Activated CD4-positive, alpha-beta T cell treated with anti-CD3 and anti-CD28 coated beads for 36 hours (primary cell): ENCODE measurements at regions of chr3 and their contacts with region 1.

Region 1: GRCh38 chr3:191336833-191337232 is 6.5 kb upstream of the UTS2B start:
- DNase-seq: no peak
- ATAC-seq: no peak
- H3K4me3 Mint-ChIP-seq: peak overlapping the region; percentile 36
- H3K27ac Mint-ChIP-seq: peak overlapping the region; percentile 58
- H3K4me1 Mint-ChIP-seq: peaks cover 51% of the 10 kb centered on the region
- H3K27me3 Mint-ChIP-seq: no peaks in the 10 kb centered on the region

Region 2: DNA sequence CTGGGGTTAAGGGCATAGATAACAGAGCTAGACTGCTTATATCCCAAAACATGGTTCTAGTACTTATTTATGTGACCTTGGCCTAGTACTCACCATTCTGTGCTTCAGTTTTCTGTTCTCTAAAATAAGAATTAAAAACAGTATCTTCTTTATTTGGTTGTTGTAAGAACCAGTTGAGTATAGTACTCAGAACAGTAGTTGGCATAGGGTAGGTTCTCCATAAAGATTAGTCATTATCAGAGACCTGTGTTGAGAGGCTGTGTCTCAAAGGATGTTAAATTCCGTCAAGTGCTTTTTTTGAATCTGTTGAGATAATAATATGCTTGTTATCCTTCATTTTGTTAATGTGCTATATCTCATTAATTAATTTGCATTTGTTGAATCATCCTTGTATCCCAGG is 185.2 kb before region 1 on chr3:
- CTCF ChIA-PET with region 1: no interaction called
- POLR2A ChIA-PET with region 1: no interaction called
- intact Hi-C with region 1: no loop called
- DNase-seq: no peak
- ATAC-seq: no peak
- H3K4me3 Mint-ChIP-seq: no peak overlapping the region
- H3K27ac Mint-ChIP-seq: no peak overlapping the region
- H3K4me1 Mint-ChIP-seq: no peaks in the 10 kb centered on the region
- H3K27me3 Mint-ChIP-seq: peaks cover 3% of the 10 kb centered on the region

Region 3: DNA sequence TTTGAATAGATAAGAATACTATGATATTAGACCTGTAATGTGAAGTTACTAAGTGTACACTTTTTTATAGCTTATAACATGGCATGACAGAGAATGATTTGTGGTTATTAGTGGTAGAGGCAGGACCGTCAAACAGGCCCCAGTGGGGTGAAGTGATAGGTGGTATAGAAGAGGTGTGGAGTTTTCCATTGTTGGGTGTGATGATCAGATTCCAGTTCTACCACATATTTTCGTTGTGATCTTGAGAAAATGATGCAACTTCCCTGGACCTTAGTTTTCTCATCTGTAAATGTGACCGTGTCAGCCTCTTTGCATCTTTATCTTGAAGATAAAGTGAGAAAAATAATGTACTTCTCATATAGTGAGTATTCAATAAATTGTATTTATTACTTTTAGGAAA is 23.8 kb after region 1 on chr3:
- CTCF ChIA-PET with region 1: interaction called, 4 read pairs
- POLR2A ChIA-PET with region 1: no interaction called
- intact Hi-C with region 1: loop called in 1 of 2 experiments (anchors 1 kb)
- DNase-seq: no peak
- ATAC-seq: no peak
- H3K4me3 Mint-ChIP-seq: no peak overlapping the region
- H3K27ac Mint-ChIP-seq: no peak overlapping the region
- H3K4me1 Mint-ChIP-seq: peaks cover 26% of the 10 kb centered on the region
- H3K27me3 Mint-ChIP-seq: no peaks in the 10 kb centered on the region